Lower lobe of right lung (tissue), 2 donors: ENCODE measurements at regions of chrX and their contacts with region 1.

Region 1: DNA sequence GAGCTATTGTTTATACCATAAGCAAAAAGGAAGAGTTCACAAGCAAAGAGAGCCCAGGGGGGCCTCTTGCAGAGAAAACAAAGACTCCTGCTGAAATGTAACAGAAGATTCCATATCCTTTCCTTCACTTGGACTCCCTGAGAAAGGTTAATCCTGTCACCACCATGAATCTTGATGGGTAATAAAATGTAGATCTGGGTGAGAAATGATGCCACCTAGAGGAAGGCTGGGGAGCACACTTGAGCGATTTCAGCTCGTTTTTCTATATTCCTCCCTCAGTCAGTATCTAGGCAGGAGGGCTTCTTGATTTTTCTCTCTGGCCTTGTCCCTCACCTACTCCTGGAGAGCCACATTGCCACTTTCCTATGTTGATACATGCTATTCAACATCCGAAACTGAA is 10.2 kb upstream of the KCNE5 start:
- DNase-seq: no peak
- ATAC-seq: peak in 1 of 2 donors; percentile 52
- H3K4me3 ChIP-seq: no peak overlapping the region
- H3K27ac ChIP-seq: no peak overlapping the region
- H3K4me1 ChIP-seq: no peaks in the 10 kb centered on the region
- H3K27me3 ChIP-seq: no peaks in the 10 kb centered on the region
- CTCF ChIP-seq: peak; percentile 18

Region 2: DNA sequence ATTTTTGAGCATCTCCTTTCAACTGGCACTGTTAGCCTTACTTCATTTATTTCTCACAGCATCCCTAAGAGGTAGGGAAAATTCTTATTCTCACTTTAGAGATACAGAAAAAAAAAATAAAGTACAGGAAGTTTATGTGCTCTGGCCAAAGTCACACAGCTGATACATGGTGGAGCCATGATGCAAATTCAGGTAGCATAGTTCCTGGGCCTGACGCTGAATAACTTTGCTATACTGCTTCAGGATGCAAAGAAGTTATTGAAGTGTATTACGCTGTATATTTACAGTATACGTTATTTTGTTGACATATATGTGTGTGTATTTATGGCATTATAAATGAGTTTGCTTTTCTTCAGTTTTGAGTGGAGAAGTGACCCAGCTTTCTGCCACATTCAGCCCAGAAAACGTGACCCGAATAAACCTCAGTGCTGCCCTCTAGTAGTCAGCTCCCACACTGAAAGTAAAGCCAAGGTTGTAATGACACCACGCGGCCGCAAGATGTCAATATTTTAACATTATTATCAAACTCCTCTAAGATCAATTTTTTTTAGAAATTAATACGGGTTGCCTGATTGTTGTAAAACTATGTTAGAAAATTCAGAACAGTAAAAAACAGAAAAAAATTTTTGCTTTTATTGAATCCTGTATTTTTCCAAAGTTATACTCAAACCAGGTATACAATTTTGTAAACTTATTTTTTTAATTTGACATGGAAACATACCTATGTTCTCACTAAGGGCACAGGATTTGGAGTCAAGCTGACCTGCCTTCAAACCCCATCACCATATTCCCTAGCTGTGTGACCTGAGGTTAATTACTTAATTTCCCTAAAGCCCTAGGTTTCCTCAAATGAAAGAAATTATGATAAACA is 149.5 kb before region 1 on chrX:
- intact Hi-C with region 1: loop called (anchors 10 kb)
- DNase-seq: peak; percentile 51
- ATAC-seq: peak; percentile 75 to 76
- H3K4me3 ChIP-seq: no peak overlapping the region
- H3K27ac ChIP-seq: no peak overlapping the region
- H3K4me1 ChIP-seq: no peaks in the 10 kb centered on the region
- H3K27me3 ChIP-seq: no peaks in the 10 kb centered on the region
- CTCF ChIP-seq: peak; percentile 81

Region 3: GRCh38 chrX:109742722-109743121 is 107.5 kb after region 1 on chrX:
- intact Hi-C with region 1: no loop called
- DNase-seq: no peak
- ATAC-seq: no peak
- H3K4me3 ChIP-seq: no peak overlapping the region
- H3K27ac ChIP-seq: no peak overlapping the region
- H3K4me1 ChIP-seq: peaks cover 5% of the 10 kb centered on the region
- H3K27me3 ChIP-seq: no peaks in the 10 kb centered on the region
- CTCF ChIP-seq: no peak